ENCODE measurements at regions of chr15 and their contacts with region 1.

Region 1: DNA sequence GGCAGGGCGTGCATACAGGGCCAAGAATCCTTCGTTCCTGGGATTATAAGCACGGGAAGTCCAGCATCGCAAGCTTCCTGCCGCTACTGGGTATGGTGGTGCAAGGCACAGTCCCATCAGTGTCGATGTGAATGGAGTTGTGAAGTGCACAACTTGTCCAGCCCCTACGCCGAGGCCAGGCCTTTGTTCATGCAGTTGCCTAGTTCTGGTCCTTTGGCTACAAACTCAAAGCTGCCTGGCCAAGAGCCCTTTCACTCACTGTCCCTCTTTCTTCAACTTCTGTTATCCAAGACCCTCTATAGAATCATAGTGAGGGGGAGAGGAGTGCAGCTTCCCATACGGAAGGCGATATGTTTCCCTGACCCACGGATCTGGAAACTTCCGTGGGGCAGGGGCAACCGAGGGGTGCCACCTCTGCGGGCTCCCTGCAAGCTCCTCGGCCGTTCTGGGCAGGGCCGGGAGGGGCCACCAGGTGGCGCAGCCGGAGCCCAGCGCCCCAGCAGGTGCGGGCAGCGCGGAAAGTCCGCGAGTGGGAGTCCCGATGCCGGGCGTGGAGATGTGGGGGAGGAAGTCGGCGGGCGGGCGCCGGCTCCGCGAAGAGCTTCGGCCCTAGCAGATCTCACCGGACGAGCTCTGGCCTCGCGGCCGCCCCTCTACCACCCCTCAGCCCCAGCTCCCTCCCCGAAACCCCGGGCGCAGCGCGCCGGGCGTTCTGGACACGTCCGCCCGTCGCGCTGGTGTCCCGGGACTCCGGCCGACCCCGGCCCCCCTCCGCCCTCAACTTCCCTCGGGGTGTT is 693 bp downstream of the RASGRP1 start:
- DNase-seq: peak; percentile 18 to 50
- ATAC-seq: peak; percentile 93 to 97
- H3K4me3 ChIP-seq: peak overlapping the region; percentile 60
- H3K27ac ChIP-seq: peak overlapping the region; percentile 58 to 86; a peak in 5 of 6 replicates
- H3K4me1 ChIP-seq: no peaks in the 10 kb centered on the region
- CTCF ChIP-seq: peak; percentile 72
- EP300 ChIP-seq: no peak
- POLR2A ChIP-seq: no peak
- RAD21 ChIP-seq: peak; percentile 33 to 65; a peak in 4 of 5 replicates

Region 2: GRCh38 chr15:38072348-38073177 is 491.4 kb before region 1 on chr15:
- CTCF ChIA-PET with region 1: no interaction called
- POLR2A ChIA-PET with region 1: no interaction called
- DNase-seq: peak; percentile 39 to 81
- ATAC-seq: peak; percentile 90 to 91
- H3K4me3 ChIP-seq: peak overlapping the region; percentile 52
- H3K27ac ChIP-seq: peak overlapping the region; percentile 84 to 88
- H3K4me1 ChIP-seq: peaks cover 25% of the 10 kb centered on the region
- CTCF ChIP-seq: peak; percentile 17; the same call in 1 of the 3 replicates
- EP300 ChIP-seq: no peak
- POLR2A ChIP-seq: peak; percentile 21; the same call in 1 of the 2 replicates
- RAD21 ChIP-seq: peak; percentile 30 to 37

Region 3: GRCh38 chr15:38576837-38577236 is 12.9 kb after region 1 on chr15:
- CTCF ChIA-PET with region 1: interaction called, 20 read pairs
- POLR2A ChIA-PET with region 1: no interaction called
- DNase-seq: no peak
- ATAC-seq: no peak
- H3K4me3 ChIP-seq: no peak overlapping the region
- H3K27ac ChIP-seq: no peak overlapping the region
- H3K4me1 ChIP-seq: no peaks in the 10 kb centered on the region
- CTCF ChIP-seq: no peak
- EP300 ChIP-seq: no peak
- POLR2A ChIP-seq: no peak
- RAD21 ChIP-seq: no peak

Region 4: GRCh38 chr15:38610748-38611147 is 46.8 kb after region 1 on chr15:
- CTCF ChIA-PET with region 1: interaction called, 11 read pairs
- POLR2A ChIA-PET with region 1: no interaction called
- DNase-seq: no peak
- ATAC-seq: no peak
- H3K4me3 ChIP-seq: no peak overlapping the region
- H3K27ac ChIP-seq: no peak overlapping the region
- H3K4me1 ChIP-seq: no peaks in the 10 kb centered on the region
- CTCF ChIP-seq: no peak
- EP300 ChIP-seq: no peak
- POLR2A ChIP-seq: no peak
- RAD21 ChIP-seq: no peak

Region 5: DNA sequence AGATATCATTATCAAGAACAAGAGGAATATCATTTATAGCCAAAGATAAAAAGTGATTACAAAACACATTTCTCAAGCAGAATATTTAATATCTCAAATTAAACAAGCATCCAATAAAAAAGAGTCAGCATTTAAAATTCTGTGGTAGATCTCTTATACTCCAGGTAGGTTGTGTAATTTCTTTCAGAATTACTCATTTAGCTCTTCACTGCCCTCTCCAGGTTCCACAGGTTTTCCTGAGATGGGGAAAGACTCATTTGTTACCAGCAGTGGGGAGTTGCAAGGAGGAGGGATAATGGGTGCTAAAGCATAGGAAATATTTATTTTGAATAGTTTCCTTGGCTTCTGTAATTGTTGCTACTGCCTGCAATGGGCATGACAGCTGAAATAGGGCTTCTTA is 83.8 kb after region 1 on chr15:
- CTCF ChIA-PET with region 1: interaction called, 33 read pairs
- POLR2A ChIA-PET with region 1: interaction called, 5 read pairs
- DNase-seq: peak; percentile 20
- ATAC-seq: peak; percentile 68 to 76; a peak in 3 of 6 replicates
- H3K4me3 ChIP-seq: no peak overlapping the region
- H3K27ac ChIP-seq: no peak overlapping the region
- H3K4me1 ChIP-seq: no peaks in the 10 kb centered on the region
- CTCF ChIP-seq: peak; percentile 40
- EP300 ChIP-seq: no peak
- POLR2A ChIP-seq: no peak
- RAD21 ChIP-seq: peak; percentile 36 to 37; a peak in 3 of 5 replicates

Region 6: GRCh38 chr15:38690689-38691332 is 126.9 kb after region 1 on chr15:
- CTCF ChIA-PET with region 1: interaction called, 40 read pairs
- POLR2A ChIA-PET with region 1: no interaction called
- DNase-seq: peak in 1 of 2 experiments; percentile 68
- ATAC-seq: peak in 1 of 2 experiments; percentile 76; a peak in 3 of 6 replicates
- H3K4me3 ChIP-seq: no peak overlapping the region
- H3K27ac ChIP-seq: no peak overlapping the region
- H3K4me1 ChIP-seq: no peaks in the 10 kb centered on the region
- CTCF ChIP-seq: peak; percentile 56
- EP300 ChIP-seq: no peak
- POLR2A ChIP-seq: no peak
- RAD21 ChIP-seq: peak; percentile 35 to 57; a peak in 3 of 5 replicates

Region 7: GRCh38 chr15:38768970-38769369 is 205.0 kb after region 1 on chr15:
- CTCF ChIA-PET with region 1: no interaction called
- POLR2A ChIA-PET with region 1: no interaction called
- DNase-seq: peak in 1 of 2 experiments; percentile 14
- ATAC-seq: peak in 1 of 2 experiments; percentile 70; a peak in 2 of 6 replicates
- H3K4me3 ChIP-seq: no peak overlapping the region
- H3K27ac ChIP-seq: peak overlapping the region in 1 of 2 experiments; percentile 26; a peak in 1 of 6 replicates
- H3K4me1 ChIP-seq: no peaks in the 10 kb centered on the region
- CTCF ChIP-seq: peak; percentile 30
- EP300 ChIP-seq: no peak
- POLR2A ChIP-seq: no peak
- RAD21 ChIP-seq: peak; percentile 28 to 40; a peak in 4 of 5 replicates

Measured in A549 (cell line).